Right ventricle myocardium inferior (tissue), 1 donor: ENCODE measurements at regions of chr15 and their contacts with region 1.

Region 1: GRCh38 chr15:68304589-68305337 is 27.2 kb downstream of the FEM1B start:
- DNase-seq: no peak
- ATAC-seq: no peak

Region 2: GRCh38 chr15:67771189-67771800 is 533.5 kb before region 1 on chr15:
- intact Hi-C with region 1: no loop called
- DNase-seq: no peak
- ATAC-seq: no peak

Region 3: DNA sequence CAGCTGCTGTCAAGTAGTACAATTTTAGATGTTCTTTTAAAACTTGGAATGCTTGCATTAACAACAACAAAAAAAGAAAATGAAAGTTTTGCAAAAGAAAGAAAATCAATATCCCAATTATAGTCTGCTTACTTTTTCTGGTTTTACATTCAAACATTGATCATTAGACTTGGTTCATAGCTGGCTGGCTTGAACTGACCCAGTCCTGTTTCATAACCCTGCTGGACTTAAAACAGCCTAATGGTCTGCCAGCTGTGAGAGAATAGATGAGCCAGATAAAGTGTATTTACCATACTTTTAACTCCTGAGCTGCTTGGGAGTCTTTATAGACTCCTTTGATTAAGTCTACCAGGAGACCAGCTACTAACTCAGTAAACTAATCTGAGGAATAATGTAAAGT is 191.5 kb before region 1 on chr15:
- intact Hi-C with region 1: no loop called
- DNase-seq: no peak
- ATAC-seq: no peak

Region 4: DNA sequence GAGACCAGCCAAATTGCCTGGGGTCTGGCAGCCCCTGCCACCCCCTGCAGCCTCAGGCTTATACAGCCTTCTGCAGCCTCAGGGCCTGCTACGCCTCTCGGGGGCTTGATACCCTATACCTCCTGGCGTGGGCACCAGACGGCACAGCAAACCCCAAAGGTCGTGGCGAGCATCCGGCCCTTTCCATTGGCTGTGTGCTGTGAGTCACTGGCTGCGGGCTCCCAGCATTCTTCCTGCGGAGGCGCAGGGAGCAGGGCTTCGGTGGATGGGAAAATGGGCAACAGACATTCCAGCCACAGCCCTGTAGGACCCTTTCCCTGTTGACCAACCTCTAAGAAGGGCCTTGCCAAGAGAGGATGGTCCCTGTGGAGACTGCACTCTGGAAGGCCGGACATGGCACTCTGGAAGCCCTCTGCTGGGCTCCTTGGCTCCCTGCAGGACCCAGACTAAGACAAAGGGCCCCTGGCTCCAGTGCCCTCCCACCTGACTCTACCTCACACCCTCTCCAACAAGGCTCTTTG is 67.6 kb after region 1 on chr15:
- intact Hi-C with region 1: loop called (anchors 2 kb)
- DNase-seq: no peak
- ATAC-seq: peak; percentile 47

Region 5: GRCh38 chr15:68383161-68384074 is 78.7 kb after region 1 on chr15:
- intact Hi-C with region 1: loop called (anchors 1 kb)
- DNase-seq: no peak
- ATAC-seq: peak; percentile 69